Activated CD8-positive, alpha-beta memory T cell treated with anti-CD3 and anti-CD28 coated beads, Interleukin-2, amount 10 ng/mL, durations not matched to agents 7 days and 5 days (primary cell): ENCODE measurements at regions of chr18 and their contacts with region 1.

Region 1: GRCh38 chr18:62249478-62250097 is 62.5 kb downstream of the RELCH start:
- DNase-seq: peak; percentile 83
- ATAC-seq: peak; percentile 49
- H3K4me3 Mint-ChIP-seq: no peak overlapping the region
- H3K27ac Mint-ChIP-seq: no peak overlapping the region
- H3K4me1 Mint-ChIP-seq: no peaks in the 10 kb centered on the region
- H3K27me3 Mint-ChIP-seq: no peaks in the 10 kb centered on the region

Region 2: DNA sequence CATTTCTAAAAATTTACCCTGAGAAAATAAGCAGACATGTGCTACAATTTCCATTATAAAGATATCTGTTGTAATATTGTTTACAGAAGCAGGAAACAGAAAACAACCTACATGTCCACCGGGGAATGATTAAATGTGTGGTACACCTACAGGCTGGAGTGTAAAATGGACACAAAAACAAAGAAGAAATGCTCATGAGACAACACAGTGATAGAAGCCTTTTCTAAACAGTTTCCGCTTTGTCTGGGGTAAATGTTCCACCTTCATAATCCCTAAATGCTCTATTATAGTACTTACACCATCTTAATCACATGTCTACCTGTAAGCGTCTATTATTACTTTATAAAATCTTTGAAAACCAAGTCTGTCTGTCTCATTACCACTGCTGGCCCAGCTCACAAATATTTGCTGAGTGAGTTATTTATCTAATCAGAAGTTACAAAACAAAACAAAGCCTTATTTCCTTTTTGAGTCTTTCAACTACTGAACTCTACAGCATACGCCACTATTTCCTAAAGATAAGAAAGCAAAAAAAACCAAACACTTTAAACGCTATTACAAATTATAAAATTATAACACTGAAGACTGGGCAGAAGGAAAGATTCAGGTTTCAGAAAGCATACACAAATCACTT is 158.0 kb before region 1 on chr18:
- CTCF ChIA-PET with region 1: no interaction called
- DNase-seq: no peak
- ATAC-seq: no peak
- H3K4me3 Mint-ChIP-seq: no peak overlapping the region
- H3K27ac Mint-ChIP-seq: no peak overlapping the region
- H3K4me1 Mint-ChIP-seq: no peaks in the 10 kb centered on the region
- H3K27me3 Mint-ChIP-seq: no peaks in the 10 kb centered on the region

Region 3: GRCh38 chr18:62186774-62187542 is 62.6 kb before region 1 on chr18 and contains the starts of genes PIGN and RELCH:
- CTCF ChIA-PET with region 1: interaction called, 32 read pairs
- DNase-seq: peak; percentile 98
- ATAC-seq: peak; percentile 92
- H3K4me3 Mint-ChIP-seq: peak within 1 kb of the TSS; percentile 99
- H3K27ac Mint-ChIP-seq: peak within 1 kb of the TSS; percentile 95
- H3K4me1 Mint-ChIP-seq: peaks cover 54% of the 10 kb centered on the region
- H3K27me3 Mint-ChIP-seq: no peaks in the 10 kb centered on the region
- total RNA-seq, gene PIGN: 27.8 to 32.1 TPM
- total RNA-seq, gene RELCH: 33.3 to 41.2 TPM

Region 4: GRCh38 chr18:62262061-62262460 is 12.5 kb after region 1 on chr18:
- CTCF ChIA-PET with region 1: interaction called, 10 read pairs
- DNase-seq: no peak
- ATAC-seq: no peak
- H3K4me3 Mint-ChIP-seq: no peak overlapping the region
- H3K27ac Mint-ChIP-seq: no peak overlapping the region
- H3K4me1 Mint-ChIP-seq: peaks cover 3% of the 10 kb centered on the region
- H3K27me3 Mint-ChIP-seq: no peaks in the 10 kb centered on the region